ENCODE measurements at regions of chr18 and their contacts with region 1.

Region 1: DNA sequence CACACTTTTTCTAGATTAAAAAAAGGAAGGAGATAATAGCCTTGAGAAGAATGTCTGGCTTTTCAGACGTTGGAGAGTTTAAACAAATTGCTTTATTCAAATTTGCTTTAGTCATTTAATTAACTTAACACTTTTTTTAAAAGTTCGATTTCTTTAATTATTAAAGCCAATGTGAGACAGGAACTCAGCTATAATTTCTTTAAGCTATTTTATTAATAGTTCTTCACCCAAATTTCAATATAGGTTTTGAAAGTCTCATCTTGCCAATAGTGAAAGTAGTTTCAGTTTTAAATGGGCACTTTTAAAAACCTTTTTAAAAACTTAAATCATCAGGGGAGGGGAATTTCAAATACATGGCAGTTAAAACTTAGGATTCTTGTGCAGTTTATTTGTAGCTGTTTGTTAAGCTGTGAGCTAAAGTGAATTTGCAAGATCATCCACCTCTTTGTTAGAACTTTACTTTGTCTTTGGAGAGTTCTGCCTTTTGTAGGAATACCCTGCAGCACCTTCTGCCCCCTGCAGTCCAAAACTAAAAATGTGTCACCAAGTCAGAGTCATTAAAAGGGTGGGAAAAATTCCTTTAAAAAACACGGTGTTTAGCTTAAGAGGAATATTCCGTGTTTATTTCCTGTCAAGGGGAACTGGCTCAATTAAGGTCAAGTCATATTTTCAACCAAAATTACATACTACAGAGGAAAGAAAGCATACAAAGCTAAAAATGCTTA is 4.6 kb downstream of the TGIF1 start:
- DNase-seq: peak; percentile 77
- ATAC-seq: no peak
- H3K4me3 ChIP-seq: peak overlapping the region; percentile 23 to 79 (median 55)
- H3K4me3 Mint-ChIP-seq: peak overlapping the region; percentile 99
- H3K27ac ChIP-seq: peak overlapping the region; percentile 53 to 82
- H3K27ac Mint-ChIP-seq: peak overlapping the region; percentile 93
- H3K4me1 ChIP-seq: peaks cover 8 to 40% of the 10 kb centered on the region in 2 donors
- H3K4me1 Mint-ChIP-seq: peaks cover 44% of the 10 kb centered on the region
- H3K27me3 ChIP-seq: no peaks in the 10 kb centered on the region
- H3K27me3 Mint-ChIP-seq: no peaks in the 10 kb centered on the region
- CTCF ChIP-seq: peak; percentile 89

Region 2: DNA sequence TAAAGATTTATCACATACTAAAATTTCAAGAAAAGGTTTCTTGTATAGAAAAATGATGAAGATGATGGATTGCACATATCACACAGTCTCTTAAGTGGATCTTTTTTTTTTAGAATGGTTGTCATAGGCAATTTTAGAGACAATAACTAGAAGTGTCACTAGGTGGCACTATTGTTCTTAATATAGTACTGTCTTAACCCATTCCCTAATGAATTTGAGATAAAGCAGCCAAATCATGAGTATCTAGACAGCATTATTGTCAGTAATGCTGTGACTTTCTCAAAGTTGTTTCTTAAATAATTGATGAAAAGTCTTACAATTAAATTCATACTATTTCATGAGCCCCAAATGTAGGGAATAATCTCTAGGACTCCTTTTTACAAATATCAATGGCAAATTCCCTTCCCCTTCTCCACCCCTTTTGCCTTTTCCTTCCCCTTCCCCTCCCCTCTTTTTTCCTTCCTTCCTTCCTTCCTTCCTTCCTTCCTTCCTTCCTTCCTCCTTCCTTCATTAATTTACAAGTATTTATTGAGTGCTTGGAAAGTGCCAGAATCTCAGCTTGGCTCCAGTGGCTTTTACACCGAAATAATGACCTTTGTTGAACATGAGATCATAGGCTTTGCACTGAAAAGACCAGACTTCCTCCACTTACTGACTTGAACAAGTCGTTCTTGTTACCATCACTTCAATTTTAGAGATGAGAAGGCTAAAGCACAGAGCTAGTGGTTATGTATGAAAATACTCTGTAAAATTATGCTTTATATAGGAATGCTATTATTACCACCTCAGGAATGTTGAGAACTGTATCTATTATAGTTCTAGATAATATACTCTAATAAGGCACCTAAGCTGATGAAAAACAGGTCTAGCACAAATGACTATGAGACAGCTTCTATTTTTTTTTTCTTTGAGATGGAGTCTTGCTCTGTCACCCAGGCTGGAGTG is 172.8 kb before region 1 on chr18:
- CTCF ChIA-PET with region 1: interaction called, 29 read pairs
- POLR2A ChIA-PET with region 1: no interaction called
- intact Hi-C with region 1: loop called (anchors 1 kb)
- DNase-seq: peak; percentile 85
- ATAC-seq: peak; percentile 48
- H3K4me3 ChIP-seq: no peak overlapping the region
- H3K4me3 Mint-ChIP-seq: no peak overlapping the region
- H3K27ac ChIP-seq: no peak overlapping the region
- H3K27ac Mint-ChIP-seq: no peak overlapping the region
- H3K4me1 ChIP-seq: peaks cover 22 to 27% of the 10 kb centered on the region in 2 donors
- H3K4me1 Mint-ChIP-seq: peaks cover 29% of the 10 kb centered on the region
- H3K27me3 ChIP-seq: no peaks in the 10 kb centered on the region
- H3K27me3 Mint-ChIP-seq: no peaks in the 10 kb centered on the region
- CTCF ChIP-seq: peak; percentile 89

Region 3: DNA sequence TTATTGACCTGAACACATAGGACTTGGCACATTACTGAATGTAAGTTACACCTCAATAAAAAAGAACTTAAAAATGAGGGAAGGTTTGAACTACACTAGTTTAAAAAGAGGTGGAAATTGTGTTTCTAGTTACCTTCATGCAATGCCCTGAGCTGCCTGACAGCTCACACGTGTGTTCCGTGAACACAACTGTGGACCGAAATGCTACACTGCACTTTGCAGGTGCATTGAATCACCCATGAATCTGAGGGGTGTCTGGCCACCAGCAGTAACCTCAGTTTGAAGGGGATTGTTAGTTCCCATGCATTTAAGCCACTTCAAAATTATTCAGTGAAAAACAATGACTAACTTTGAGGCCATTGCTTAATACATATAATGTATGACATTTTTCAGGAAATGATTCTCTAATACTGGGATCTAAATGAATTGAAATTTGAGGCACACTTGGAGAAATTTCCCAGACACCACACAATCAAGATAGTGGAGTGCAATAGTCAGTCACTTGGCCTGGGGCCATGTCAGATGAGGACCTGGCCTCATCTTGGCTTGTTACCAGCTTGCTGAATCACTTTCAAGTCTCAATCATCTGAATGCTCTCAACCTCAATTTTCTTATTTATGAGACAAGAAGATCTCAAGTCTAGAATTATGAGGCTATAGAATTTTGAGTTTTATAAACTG is 133.3 kb before region 1 on chr18:
- CTCF ChIA-PET with region 1: interaction called, 41 read pairs
- POLR2A ChIA-PET with region 1: interaction called, 3 read pairs
- intact Hi-C with region 1: loop called (anchors 2 kb)
- DNase-seq: no peak
- ATAC-seq: no peak
- H3K4me3 ChIP-seq: no peak overlapping the region
- H3K4me3 Mint-ChIP-seq: no peak overlapping the region
- H3K27ac ChIP-seq: no peak overlapping the region
- H3K27ac Mint-ChIP-seq: no peak overlapping the region
- H3K4me1 ChIP-seq: peaks cover 0 to 6% of the 10 kb centered on the region in 2 donors
- H3K4me1 Mint-ChIP-seq: peaks cover 13% of the 10 kb centered on the region
- H3K27me3 ChIP-seq: no peaks in the 10 kb centered on the region
- H3K27me3 Mint-ChIP-seq: peaks cover 4% of the 10 kb centered on the region
- CTCF ChIP-seq: no peak

Region 4: DNA sequence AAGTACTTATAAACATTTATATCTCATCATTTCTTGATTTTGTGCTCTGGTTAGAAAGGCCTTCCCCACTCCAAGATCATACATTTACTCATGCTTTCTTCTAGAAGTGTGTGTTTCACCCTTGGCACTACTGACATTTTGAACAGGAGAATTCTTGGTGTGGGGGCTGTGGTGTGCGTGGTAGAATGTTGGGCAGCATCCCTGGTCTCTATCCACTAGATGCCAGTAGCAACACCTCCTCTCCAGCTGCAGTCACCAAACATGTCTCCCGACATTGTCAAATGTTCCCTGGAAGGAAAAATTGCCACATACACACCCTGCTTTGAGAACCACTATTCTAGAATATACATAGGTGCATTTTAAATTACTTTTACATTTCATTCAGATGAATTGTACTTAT is 13.2 kb before region 1 on chr18:
- CTCF ChIA-PET with region 1: interaction called, 17 read pairs
- POLR2A ChIA-PET with region 1: no interaction called
- intact Hi-C with region 1: no loop called
- DNase-seq: peak; percentile 43
- ATAC-seq: peak; percentile 54
- H3K4me3 ChIP-seq: no peak overlapping the region
- H3K4me3 Mint-ChIP-seq: no peak overlapping the region
- H3K27ac ChIP-seq: no peak overlapping the region
- H3K27ac Mint-ChIP-seq: no peak overlapping the region
- H3K4me1 ChIP-seq: no peaks in the 10 kb centered on the region
- H3K4me1 Mint-ChIP-seq: peaks cover 2% of the 10 kb centered on the region
- H3K27me3 ChIP-seq: no peaks in the 10 kb centered on the region
- H3K27me3 Mint-ChIP-seq: no peaks in the 10 kb centered on the region
- CTCF ChIP-seq: no peak

Region 5: GRCh38 chr18:3585656-3586509 is 131.4 kb after region 1 on chr18:
- CTCF ChIA-PET with region 1: interaction called, 45 read pairs
- POLR2A ChIA-PET with region 1: interaction called, 20 read pairs
- intact Hi-C with region 1: no loop called
- DNase-seq: peak; percentile 80
- ATAC-seq: peak; percentile 49
- H3K4me3 ChIP-seq: peak overlapping the region in 4 of 5 experiments; percentile 9 to 22 (median 18)
- H3K4me3 Mint-ChIP-seq: peak overlapping the region; percentile 69
- H3K27ac ChIP-seq: peak overlapping the region; percentile 81 to 87
- H3K27ac Mint-ChIP-seq: peak overlapping the region; percentile 83
- H3K4me1 ChIP-seq: peaks cover 42 to 43% of the 10 kb centered on the region in 2 donors
- H3K4me1 Mint-ChIP-seq: peaks cover 47% of the 10 kb centered on the region
- H3K27me3 ChIP-seq: no peaks in the 10 kb centered on the region
- H3K27me3 Mint-ChIP-seq: no peaks in the 10 kb centered on the region
- CTCF ChIP-seq: peak; percentile 57